ENCODE measurements at regions of chr2 and their contacts with region 1.

Region 1: DNA sequence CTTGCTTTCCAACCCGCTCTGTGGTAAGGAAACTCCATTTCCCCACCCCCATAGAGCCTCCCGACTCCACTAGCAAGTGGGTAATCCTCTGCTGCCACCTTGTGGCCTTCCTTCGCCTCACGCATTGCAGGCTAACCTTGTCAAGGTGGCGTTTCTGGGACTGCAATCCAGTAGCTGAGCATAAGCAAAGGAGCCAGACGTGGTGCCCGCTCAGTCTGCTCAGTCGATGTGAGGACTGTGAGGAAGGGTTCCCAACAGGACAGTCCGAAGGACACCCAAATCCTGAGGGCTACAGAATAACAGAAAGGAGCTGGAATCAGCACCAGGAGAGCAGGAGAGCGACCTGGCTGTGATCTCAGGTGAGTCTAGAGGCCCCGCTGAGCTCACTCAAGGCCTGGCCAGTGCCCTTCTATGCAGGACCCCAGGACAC is 144.2 kb downstream of the SUCLG1 start:
- DNase-seq: peak; percentile 15
- ATAC-seq: peak; percentile 100
- H3K4me3 ChIP-seq: no peak overlapping the region
- H3K27ac ChIP-seq: no peak overlapping the region
- H3K4me1 ChIP-seq: no peaks in the 10 kb centered on the region
- H3K27me3 ChIP-seq: no peaks in the 10 kb centered on the region
- CTCF ChIP-seq: peak; percentile 91 to 94 (median 94)
- EP300 ChIP-seq: no peak
- POLR2A ChIP-seq: no peak
- RAD21 ChIP-seq: peak; percentile 94

Region 2: DNA sequence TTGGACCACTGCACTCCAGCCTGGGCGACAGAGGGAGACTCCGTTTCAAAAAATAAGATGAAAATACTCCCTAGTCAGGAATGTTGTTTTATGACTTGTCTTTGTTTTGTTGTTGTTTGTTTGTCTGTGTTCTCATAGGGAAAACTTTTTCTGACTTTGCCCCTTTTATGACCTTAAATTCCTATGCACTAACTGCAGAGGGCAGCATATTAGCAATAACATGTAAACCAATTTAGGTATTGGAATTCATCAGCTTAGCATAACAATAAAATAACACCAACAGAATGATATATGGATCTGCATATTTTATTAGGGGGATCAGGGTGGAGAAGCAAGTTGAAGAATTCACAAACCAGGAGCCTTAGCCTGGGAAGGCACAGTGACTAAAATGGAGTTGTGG is 487.3 kb before region 1 on chr2:
- CTCF ChIA-PET with region 1: interaction called, 3 read pairs
- POLR2A ChIA-PET with region 1: no interaction called
- RAD21 ChIA-PET with region 1: no interaction called
- SMC1A ChIA-PET with region 1: interaction called, 3 read pairs
- in situ Hi-C with region 1: no loop called
- intact Hi-C with region 1: loop called (anchors 10 kb)
- DNase-seq: no peak
- ATAC-seq: no peak
- H3K4me3 ChIP-seq: no peak overlapping the region
- H3K27ac ChIP-seq: no peak overlapping the region
- H3K4me1 ChIP-seq: no peaks in the 10 kb centered on the region
- H3K27me3 ChIP-seq: no peaks in the 10 kb centered on the region
- CTCF ChIP-seq: no peak; a peak in 1 of 6 replicates
- EP300 ChIP-seq: no peak
- POLR2A ChIP-seq: no peak
- RAD21 ChIP-seq: 0 out of 2 replicates have a peak, but pooled peaks have one; percentile 10

Region 3: DNA sequence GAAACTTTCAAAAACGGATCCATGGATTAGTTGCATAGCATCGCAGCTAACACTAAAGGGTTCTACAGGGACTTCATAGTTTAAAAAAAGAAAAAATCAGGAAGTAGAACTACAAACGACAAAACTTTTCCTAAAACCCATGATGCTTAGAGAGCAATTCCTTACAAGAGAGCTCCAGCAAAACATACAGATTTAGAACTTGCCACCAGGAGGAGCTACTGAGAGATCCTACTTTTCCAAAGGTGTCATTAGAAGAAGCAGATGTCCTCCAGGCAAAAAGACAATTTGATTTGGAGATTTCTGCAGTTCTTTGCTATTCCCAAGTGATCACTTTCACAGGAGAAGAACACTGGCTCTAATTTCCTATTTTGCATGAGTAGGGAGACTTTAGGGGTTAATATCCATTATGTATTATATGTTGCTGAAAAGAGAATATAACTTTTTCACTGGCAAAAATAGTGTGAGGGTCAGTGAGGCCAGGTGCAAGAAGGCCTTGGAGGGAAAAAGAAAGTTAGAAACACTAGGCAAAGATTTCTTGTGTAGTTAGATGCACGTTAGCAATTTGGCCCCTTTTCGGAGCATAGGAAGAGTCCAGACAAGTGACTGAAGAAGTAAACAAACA is 292.0 kb before region 1 on chr2:
- CTCF ChIA-PET with region 1: interaction called, 31 read pairs
- POLR2A ChIA-PET with region 1: no interaction called
- RAD21 ChIA-PET with region 1: interaction called, 4 read pairs
- SMC1A ChIA-PET with region 1: interaction called, 4 read pairs
- in situ Hi-C with region 1: no loop called
- intact Hi-C with region 1: no loop called
- DNase-seq: no peak
- ATAC-seq: peak; percentile 49; the same call in 1 of the 3 replicates
- H3K4me3 ChIP-seq: no peak overlapping the region
- H3K27ac ChIP-seq: no peak overlapping the region
- H3K4me1 ChIP-seq: no peaks in the 10 kb centered on the region
- H3K27me3 ChIP-seq: no peaks in the 10 kb centered on the region
- CTCF ChIP-seq: peak; percentile 59 to 70 (median 64); a peak in 5 of 6 replicates
- EP300 ChIP-seq: no peak
- POLR2A ChIP-seq: no peak
- RAD21 ChIP-seq: peak; percentile 52

Region 4: DNA sequence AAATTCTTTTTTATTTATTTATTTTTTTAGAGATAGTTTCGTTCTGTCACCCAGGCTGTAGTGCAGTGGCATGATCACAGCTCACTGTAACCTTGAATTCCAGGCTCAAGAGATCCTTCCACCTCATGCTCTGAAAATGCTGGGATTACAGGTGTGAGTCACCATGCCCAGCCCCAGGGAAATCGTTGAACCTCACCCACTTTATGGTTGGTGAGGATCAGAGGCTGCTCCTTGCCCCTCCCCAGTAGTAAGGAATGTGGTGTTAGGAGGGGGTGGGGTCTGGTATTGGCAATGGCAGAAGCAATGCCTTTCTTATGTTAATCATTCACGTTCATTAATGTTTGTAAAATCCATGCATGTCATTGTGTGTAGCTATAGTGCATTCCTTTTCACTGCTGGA is 17.8 kb before region 1 on chr2:
- CTCF ChIA-PET with region 1: interaction called, 16 read pairs
- POLR2A ChIA-PET with region 1: no interaction called
- RAD21 ChIA-PET with region 1: no interaction called
- SMC1A ChIA-PET with region 1: interaction called, 5 read pairs
- in situ Hi-C with region 1: no loop called
- intact Hi-C with region 1: no loop called
- DNase-seq: no peak
- ATAC-seq: no peak
- H3K4me3 ChIP-seq: no peak overlapping the region
- H3K27ac ChIP-seq: no peak overlapping the region
- H3K4me1 ChIP-seq: no peaks in the 10 kb centered on the region
- H3K27me3 ChIP-seq: 0 out of 4 replicates have a peak, but pooled peaks cover 0 to 3% of the 10 kb centered on the region in 2 experiments
- CTCF ChIP-seq: no peak
- EP300 ChIP-seq: no peak
- POLR2A ChIP-seq: no peak
- RAD21 ChIP-seq: no peak

Region 5: DNA sequence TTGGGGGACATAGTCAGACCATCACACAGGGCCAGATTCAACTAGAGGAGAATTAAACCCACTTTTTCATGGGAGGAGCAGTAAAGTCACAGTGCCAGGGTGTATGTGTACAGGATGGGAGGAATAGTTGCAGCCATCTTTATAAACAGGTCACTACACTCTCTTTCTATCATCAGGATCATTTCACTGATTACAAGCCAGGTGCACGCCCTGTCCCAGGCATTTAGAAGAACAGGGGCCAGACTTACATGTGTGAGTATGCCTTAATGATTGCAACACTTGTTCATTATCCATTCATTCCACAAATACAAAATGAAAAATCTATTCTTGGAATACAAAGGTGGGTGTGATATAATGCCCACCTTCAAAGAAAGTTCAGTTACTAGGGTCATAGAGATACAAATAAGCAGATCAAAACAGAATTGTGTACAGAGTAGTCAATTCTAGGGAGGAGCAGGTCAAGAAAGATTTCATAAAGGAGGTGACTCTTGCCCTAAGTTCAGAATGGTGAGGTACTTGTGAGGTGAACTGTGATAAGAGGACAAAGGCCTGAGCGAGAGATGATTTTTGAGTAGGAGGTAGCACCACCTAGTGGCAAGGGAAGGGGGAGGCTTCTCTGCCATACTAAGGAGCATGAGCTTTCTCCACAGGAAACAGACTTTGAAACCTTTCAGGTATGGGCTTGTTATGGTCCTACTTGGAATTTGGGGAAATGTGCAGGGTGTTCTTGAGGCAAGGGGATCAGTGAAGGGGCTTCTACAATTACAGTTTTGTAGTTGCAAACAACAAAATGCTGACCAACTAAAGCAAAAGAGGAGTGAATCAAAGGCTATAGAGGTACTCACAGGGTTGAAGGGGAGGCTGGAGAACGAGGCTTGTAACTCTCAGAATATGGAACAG is 12.2 kb before region 1 on chr2:
- CTCF ChIA-PET with region 1: interaction called, 32 read pairs
- POLR2A ChIA-PET with region 1: no interaction called
- RAD21 ChIA-PET with region 1: interaction called, 3 read pairs
- SMC1A ChIA-PET with region 1: interaction called, 6 read pairs
- in situ Hi-C with region 1: no loop called
- intact Hi-C with region 1: no loop called
- DNase-seq: peak; percentile 16
- ATAC-seq: peak; percentile 99
- H3K4me3 ChIP-seq: no peak overlapping the region
- H3K27ac ChIP-seq: no peak overlapping the region
- H3K4me1 ChIP-seq: no peaks in the 10 kb centered on the region
- H3K27me3 ChIP-seq: no peaks in the 10 kb centered on the region
- CTCF ChIP-seq: peak; percentile 88 to 93 (median 88)
- EP300 ChIP-seq: no peak
- POLR2A ChIP-seq: no peak
- RAD21 ChIP-seq: peak; percentile 80